Activated T-helper 2 cell treated with anti-CD3 and anti-CD28 coated beads, Interferon-gamma antibody, Interleukin-2, Interleukin-4, amounts not matched to agents 10 μg/mL and 5 μg/mL and 100 μg/mL, durations not matched to agents 14 hours and 24 hours and 36 hours (primary cell): ENCODE measurements at regions of chr14 and their contacts with region 1.

Region 1: DNA sequence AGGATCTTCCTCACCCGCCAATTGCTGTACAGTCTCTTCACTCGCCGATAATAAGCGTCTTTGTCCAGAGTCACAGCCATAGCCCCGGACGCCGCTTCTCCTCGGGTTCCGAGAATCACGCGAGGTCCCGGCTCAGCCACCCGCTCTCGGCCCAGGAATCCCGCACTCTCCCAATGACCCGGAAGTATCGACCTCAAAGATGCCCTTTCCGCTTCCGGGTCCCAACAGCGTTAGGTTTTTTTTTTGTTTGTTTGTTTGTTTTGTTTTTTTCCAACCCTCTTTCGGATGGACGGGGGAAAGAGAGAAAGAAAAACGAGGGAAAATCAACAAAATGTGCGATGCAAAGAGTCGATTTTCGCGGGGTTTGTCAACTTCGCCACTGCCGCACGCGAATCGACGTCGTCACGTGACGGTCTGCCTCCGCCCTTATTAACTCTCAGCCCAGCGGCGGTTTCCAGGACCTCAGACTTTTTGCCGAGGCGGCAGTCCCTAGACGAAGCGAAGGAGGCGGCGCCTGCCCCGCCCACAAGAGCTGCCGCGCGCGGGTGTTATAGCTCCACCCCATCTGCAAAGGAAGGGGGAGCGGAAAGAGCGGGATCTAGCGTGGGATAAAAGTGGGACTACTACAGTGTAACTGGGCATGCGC is at the start of gene SUPT16H:
- DNase-seq: peak; percentile 94
- H3K4me3 Mint-ChIP-seq: peak within 1 kb of the TSS; percentile 96
- H3K27ac Mint-ChIP-seq: peak within 1 kb of the TSS; percentile 98
- H3K4me1 Mint-ChIP-seq: peaks cover 24% of the 10 kb centered on the region
- H3K27me3 Mint-ChIP-seq: no peaks in the 10 kb centered on the region
- total RNA-seq, gene SUPT16H: 161 and 168 TPM in 2 replicates

Region 2: GRCh38 chr14:21229821-21230220 is 154.2 kb before region 1 on chr14:
- intact Hi-C with region 1: loop called (anchors 2 kb)
- DNase-seq: no peak
- H3K4me3 Mint-ChIP-seq: peak overlapping the region; percentile 69
- H3K27ac Mint-ChIP-seq: peak overlapping the region; percentile 96
- H3K4me1 Mint-ChIP-seq: peaks cover 66% of the 10 kb centered on the region
- H3K27me3 Mint-ChIP-seq: no peaks in the 10 kb centered on the region

Region 3: GRCh38 chr14:21244540-21244939 is 139.4 kb before region 1 on chr14:
- intact Hi-C with region 1: no loop called
- DNase-seq: no peak
- H3K4me3 Mint-ChIP-seq: no peak overlapping the region
- H3K27ac Mint-ChIP-seq: peak overlapping the region; percentile 46
- H3K4me1 Mint-ChIP-seq: peaks cover 38% of the 10 kb centered on the region
- H3K27me3 Mint-ChIP-seq: no peaks in the 10 kb centered on the region

Region 4: GRCh38 chr14:21269252-21270046 is 114.5 kb before region 1 on chr14 and contains the start of gene HNRNPC:
- intact Hi-C with region 1: loop called (anchors 1 kb)
- DNase-seq: peak; percentile 100
- H3K4me3 Mint-ChIP-seq: peak within 1 kb of the TSS; percentile 99
- H3K27ac Mint-ChIP-seq: peak within 1 kb of the TSS; percentile 100
- H3K4me1 Mint-ChIP-seq: peaks cover 29% of the 10 kb centered on the region
- H3K27me3 Mint-ChIP-seq: no peaks in the 10 kb centered on the region
- total RNA-seq, gene HNRNPC: 972 and 976 TPM in 2 replicates

Region 5: GRCh38 chr14:21437063-21437901 is 53.3 kb after region 1 on chr14:
- intact Hi-C with region 1: loop called (anchors 1 kb)
- DNase-seq: peak; percentile 95
- H3K4me3 Mint-ChIP-seq: peak overlapping the region; percentile 88
- H3K27ac Mint-ChIP-seq: peak overlapping the region; percentile 79
- H3K4me1 Mint-ChIP-seq: peaks cover 54% of the 10 kb centered on the region
- H3K27me3 Mint-ChIP-seq: no peaks in the 10 kb centered on the region

Region 6: GRCh38 chr14:21476925-21477681 is 93.1 kb after region 1 on chr14 and contains the starts of genes RAB2B and TOX4:
- intact Hi-C with region 1: loop called (anchors 1 kb)
- DNase-seq: peak; percentile 97
- H3K4me3 Mint-ChIP-seq: peak within 1 kb of the TSS; percentile 99
- H3K27ac Mint-ChIP-seq: peak within 1 kb of the TSS; percentile 99
- H3K4me1 Mint-ChIP-seq: peaks cover 18% of the 10 kb centered on the region
- H3K27me3 Mint-ChIP-seq: no peaks in the 10 kb centered on the region
- total RNA-seq, gene RAB2B: 27.4 and 30.5 TPM in 2 replicates
- total RNA-seq, gene TOX4: 68.1 and 70.1 TPM in 2 replicates